B cell (primary cell): ENCODE measurements at regions of chr15 and their contacts with region 1.

Region 1: DNA sequence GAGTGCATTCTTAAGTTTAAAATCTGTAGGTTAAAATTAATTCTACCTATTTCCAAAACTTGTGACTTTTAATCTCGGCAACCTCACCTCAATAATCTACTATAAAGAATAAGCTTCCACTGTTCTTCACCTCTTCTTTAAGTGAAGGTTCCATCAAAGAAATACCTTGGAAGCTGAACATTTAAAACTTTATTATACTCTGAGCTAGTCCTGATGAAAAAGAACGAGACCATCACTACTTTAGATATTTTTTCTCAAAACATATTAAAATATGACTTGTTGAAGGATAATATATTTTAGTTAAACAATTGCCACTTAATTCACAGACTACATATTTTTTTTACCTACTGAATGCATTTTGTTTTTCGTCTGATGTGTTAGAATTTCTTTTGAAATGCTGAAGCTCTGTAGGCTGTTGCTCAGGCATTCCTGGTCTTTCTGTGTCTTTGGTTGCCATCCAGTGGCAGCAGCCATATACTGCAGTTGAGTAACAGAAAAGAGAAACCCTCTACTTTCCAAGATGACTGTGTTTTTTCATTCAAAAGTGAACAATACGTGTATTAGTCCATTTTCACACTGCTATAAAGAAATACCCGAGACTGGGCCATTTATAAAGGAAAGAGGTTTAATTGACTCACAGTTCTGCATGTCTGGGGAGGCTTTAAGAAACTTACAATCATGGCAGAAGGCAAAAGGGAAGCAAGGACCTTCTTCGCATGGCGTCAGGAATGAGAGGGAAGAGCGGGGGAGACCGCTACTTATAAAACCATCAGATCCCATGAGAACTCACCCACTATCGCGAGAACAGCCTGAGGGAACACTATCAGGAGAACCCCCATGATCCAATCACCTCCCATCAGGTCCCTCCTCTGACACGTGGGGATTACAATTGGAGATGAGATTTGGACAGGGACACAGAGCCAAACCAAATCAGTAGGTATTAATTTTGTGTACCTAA is 4.5 kb upstream of the GOLGA8B start:
- DNase-seq: peak; percentile 69
- ATAC-seq: peak; percentile 61
- H3K4me3 ChIP-seq: peak overlapping the region in 1 of 5 experiments; percentile 15
- H3K4me3 Mint-ChIP-seq: peak overlapping the region; percentile 69
- H3K27ac ChIP-seq: no peak overlapping the region
- H3K27ac Mint-ChIP-seq: peak overlapping the region; percentile 4
- H3K4me1 ChIP-seq: peaks cover 5 to 11% of the 10 kb centered on the region in 2 donors
- H3K4me1 Mint-ChIP-seq: peaks cover 9% of the 10 kb centered on the region
- H3K27me3 ChIP-seq: peaks cover 0 to 7% (median 2%) of the 10 kb centered on the region in 4 experiments
- H3K27me3 Mint-ChIP-seq: peaks cover 4% of the 10 kb centered on the region
- CTCF ChIP-seq: peak; percentile 87

Region 2: DNA sequence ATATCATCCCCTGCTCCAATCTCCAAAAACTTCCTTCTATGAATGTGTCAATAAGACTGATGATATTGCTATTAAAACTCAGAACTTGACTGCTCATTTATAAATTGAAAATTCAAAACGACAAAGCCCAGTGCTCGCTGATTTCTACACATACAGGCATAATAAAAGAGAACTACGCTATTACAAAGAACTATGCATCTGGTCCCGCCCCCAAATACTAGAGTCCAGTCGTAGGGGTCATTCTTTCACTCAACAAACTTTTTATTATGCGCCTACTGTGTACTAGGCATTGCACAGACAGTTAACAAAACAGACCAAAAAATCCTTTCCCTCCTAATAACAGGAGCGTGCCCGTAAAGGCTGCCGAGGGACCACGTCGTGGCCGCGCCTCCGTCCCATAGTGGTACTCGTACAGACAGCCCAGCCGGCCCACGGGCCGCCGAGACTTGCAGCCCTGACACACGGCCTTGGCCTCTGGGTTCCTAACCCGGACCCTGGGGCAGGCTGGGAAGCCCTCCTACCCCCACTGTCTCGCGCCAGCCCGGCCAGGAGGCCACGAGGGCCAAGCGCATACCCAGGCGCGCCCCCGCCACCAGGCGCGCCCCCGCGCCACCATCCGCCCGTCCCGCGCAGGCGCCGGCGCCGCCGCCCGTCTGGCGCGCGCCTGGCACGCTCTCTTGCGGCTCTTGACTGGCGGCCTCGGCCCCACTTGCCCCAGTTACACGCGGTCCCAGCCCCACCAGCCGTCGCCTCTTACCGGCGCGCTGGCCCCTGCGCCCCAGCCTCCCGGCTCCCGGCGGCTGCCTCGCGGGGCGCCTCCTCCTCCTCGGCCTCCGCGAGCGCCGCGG is 549.7 kb before region 1 on chr15:
- CTCF ChIA-PET with region 1: interaction called, 3 read pairs
- POLR2A ChIA-PET with region 1: no interaction called
- intact Hi-C with region 1: loop called (anchors 2 kb)
- DNase-seq: peak; percentile 89
- ATAC-seq: peak; percentile 78
- H3K4me3 ChIP-seq: peak overlapping the region; percentile 63 to 98 (median 66)
- H3K4me3 Mint-ChIP-seq: peak overlapping the region; percentile 97
- H3K27ac ChIP-seq: peak overlapping the region; percentile 49 to 78
- H3K27ac Mint-ChIP-seq: peak overlapping the region; percentile 96
- H3K4me1 ChIP-seq: peaks cover 14 to 15% of the 10 kb centered on the region in 2 donors
- H3K4me1 Mint-ChIP-seq: peaks cover 18% of the 10 kb centered on the region
- H3K27me3 ChIP-seq: no peaks in the 10 kb centered on the region
- H3K27me3 Mint-ChIP-seq: no peaks in the 10 kb centered on the region
- CTCF ChIP-seq: no peak

Region 3: GRCh38 chr15:34065941-34066340 is 522.1 kb before region 1 on chr15:
- CTCF ChIA-PET with region 1: interaction called, 44 read pairs
- POLR2A ChIA-PET with region 1: no interaction called
- intact Hi-C with region 1: no loop called
- DNase-seq: no peak
- ATAC-seq: no peak
- H3K4me3 ChIP-seq: no peak overlapping the region
- H3K4me3 Mint-ChIP-seq: no peak overlapping the region
- H3K27ac ChIP-seq: no peak overlapping the region
- H3K27ac Mint-ChIP-seq: no peak overlapping the region
- H3K4me1 ChIP-seq: peaks cover 0 to 4% of the 10 kb centered on the region in 2 donors
- H3K4me1 Mint-ChIP-seq: peaks cover 4% of the 10 kb centered on the region
- H3K27me3 ChIP-seq: no peaks in the 10 kb centered on the region
- H3K27me3 Mint-ChIP-seq: no peaks in the 10 kb centered on the region
- CTCF ChIP-seq: no peak

Region 4: GRCh38 chr15:34109797-34110663 is 478.0 kb before region 1 on chr15:
- CTCF ChIA-PET with region 1: interaction called, 15 read pairs
- POLR2A ChIA-PET with region 1: no interaction called
- intact Hi-C with region 1: loop called (anchors 1 kb)
- DNase-seq: peak; percentile 38
- ATAC-seq: peak; percentile 54
- H3K4me3 ChIP-seq: no peak overlapping the region
- H3K4me3 Mint-ChIP-seq: no peak overlapping the region
- H3K27ac ChIP-seq: no peak overlapping the region
- H3K27ac Mint-ChIP-seq: no peak overlapping the region
- H3K4me1 ChIP-seq: no peaks in the 10 kb centered on the region
- H3K4me1 Mint-ChIP-seq: no peaks in the 10 kb centered on the region
- H3K27me3 ChIP-seq: no peaks in the 10 kb centered on the region
- H3K27me3 Mint-ChIP-seq: peaks cover 10% of the 10 kb centered on the region
- CTCF ChIP-seq: peak; percentile 57

Region 5: DNA sequence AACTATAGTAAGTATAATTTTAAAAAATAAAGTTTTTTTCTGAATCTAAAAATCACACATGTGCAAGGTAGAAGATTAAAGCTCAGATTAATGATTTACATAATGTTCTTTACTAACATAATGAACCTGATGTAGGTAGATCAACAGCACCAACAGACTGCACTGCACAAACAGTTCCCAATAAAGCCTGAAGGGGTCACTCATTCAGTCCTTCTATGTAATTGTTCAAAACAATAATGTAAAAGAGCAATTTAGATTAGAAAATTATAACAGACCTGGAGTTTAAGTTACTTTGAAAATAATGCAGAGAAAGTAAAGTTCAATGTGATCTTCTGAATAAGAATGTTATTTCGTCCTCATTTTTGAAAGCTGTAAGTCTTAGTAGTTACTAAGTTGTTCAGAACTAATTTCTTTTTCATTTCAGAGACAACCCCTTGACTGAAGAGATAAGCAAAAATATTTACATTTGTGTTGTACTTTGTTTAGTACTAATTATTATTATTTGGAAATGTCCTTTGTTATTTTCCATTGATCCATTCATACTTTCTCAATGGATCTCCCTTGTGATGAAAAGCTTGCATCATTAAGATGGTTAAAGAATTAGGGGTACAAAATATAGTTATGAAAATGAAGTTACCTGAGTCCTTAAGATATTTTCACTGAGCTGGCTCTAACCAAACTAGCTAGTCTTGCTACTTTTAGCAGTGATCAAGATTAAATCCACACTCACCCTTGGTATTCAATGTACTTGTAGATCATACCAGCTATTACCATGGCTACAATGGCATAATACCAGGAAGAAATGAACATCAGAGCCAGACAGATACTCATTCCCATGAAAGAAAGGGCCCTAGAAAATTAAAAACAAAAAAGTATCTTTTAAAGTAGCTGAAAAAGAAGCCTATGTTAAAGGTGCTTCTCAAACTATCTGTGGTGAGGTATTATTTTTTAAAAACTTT is 346.3 kb before region 1 on chr15:
- CTCF ChIA-PET with region 1: interaction called, 29 read pairs
- POLR2A ChIA-PET with region 1: no interaction called
- intact Hi-C with region 1: loop called (anchors 1 kb)
- DNase-seq: peak; percentile 70
- ATAC-seq: peak; percentile 80
- H3K4me3 ChIP-seq: no peak overlapping the region
- H3K4me3 Mint-ChIP-seq: no peak overlapping the region
- H3K27ac ChIP-seq: no peak overlapping the region
- H3K27ac Mint-ChIP-seq: no peak overlapping the region
- H3K4me1 ChIP-seq: no peaks in the 10 kb centered on the region
- H3K4me1 Mint-ChIP-seq: no peaks in the 10 kb centered on the region
- H3K27me3 ChIP-seq: no peaks in the 10 kb centered on the region
- H3K27me3 Mint-ChIP-seq: no peaks in the 10 kb centered on the region
- CTCF ChIP-seq: peak; percentile 96